CD14-positive monocyte (primary cell): ENCODE measurements at regions of chr10 and their contacts with region 1.

Region 1: DNA sequence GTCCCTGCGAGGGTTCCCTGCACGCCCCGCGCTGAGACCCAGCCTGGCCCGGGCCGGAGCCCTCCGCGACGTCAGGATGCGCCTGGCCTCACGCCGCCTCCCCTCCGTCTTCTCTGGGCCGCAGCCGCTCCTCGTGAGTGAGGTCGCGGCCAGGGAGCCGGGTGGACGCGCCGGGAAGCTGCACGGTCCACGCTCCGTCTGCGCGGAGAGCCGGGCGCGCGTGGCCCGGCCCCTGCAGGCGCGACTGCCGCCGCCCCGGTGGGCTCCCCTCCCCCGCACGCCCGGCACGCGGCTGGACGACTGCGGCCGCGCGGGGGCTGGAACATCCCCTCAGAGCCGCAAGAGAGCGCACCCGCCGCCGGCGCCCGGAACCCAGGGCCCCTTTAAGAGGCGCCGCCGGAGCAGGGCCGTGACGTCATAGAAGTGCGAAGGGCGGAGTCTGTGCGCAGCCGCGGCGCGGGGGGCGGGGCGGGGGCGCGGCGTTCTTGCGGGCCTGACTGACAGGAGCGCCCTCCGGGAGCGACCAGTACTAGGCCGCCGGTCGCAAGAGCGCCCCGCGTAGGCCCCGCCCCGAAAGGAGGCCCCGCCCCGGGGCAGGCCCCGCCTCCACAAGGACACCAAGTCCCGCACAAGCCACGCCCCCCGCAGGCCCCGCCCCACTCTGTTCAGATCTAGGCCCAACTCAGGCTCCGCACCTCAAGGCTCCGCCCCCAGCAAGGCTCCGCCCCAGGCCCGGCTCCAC is 445 bp upstream of the INPP5A start:
- DNase-seq: peak; percentile 99
- H3K4me3 ChIP-seq: peak overlapping the region; percentile 20 to 74 (median 42)
- H3K4me3 Mint-ChIP-seq: peak overlapping the region; percentile 62 to 72
- H3K27ac ChIP-seq: peak overlapping the region in 1 of 2 donors; percentile 70
- H3K27ac Mint-ChIP-seq: no peak overlapping the region
- H3K4me1 ChIP-seq: peaks cover 47 to 58% of the 10 kb centered on the region in 2 donors
- H3K4me1 Mint-ChIP-seq: peaks cover 54% of the 10 kb centered on the region
- H3K27me3 ChIP-seq: no peaks in the 10 kb centered on the region
- H3K27me3 Mint-ChIP-seq: peaks cover 3 to 10% (median 8%) of the 10 kb centered on the region in 3 donors
- CTCF ChIP-seq: no peak

Region 2: GRCh38 chr10:132307823-132308587 is 229.1 kb before region 1 on chr10 and contains the start of gene STK32C:
- intact Hi-C with region 1: loop called (anchors 5 to 10 kb)
- DNase-seq: peak; percentile 84 to 89 (median 86)
- H3K4me3 ChIP-seq: peak within 1 kb of the TSS; percentile 69 to 87 (median 82)
- H3K4me3 Mint-ChIP-seq: peak within 1 kb of the TSS; percentile 96 to 97
- H3K27ac ChIP-seq: peak within 1 kb of the TSS in 1 of 2 donors; percentile 56
- H3K27ac Mint-ChIP-seq: peak within 1 kb of the TSS in 2 of 7 donors; percentile 26 to 76
- H3K4me1 ChIP-seq: peaks cover 16 to 24% of the 10 kb centered on the region in 2 donors
- H3K4me1 Mint-ChIP-seq: peaks cover 24% of the 10 kb centered on the region
- H3K27me3 ChIP-seq: peaks cover 4 to 33% of the 10 kb centered on the region in 2 donors
- H3K27me3 Mint-ChIP-seq: peaks cover 24 to 41% (median 25%) of the 10 kb centered on the region in 3 donors
- CTCF ChIP-seq: no peak
- polyA plus RNA-seq, gene STK32C: 13.6 to 22.8 (median 18.4) TPM

Region 3: DNA sequence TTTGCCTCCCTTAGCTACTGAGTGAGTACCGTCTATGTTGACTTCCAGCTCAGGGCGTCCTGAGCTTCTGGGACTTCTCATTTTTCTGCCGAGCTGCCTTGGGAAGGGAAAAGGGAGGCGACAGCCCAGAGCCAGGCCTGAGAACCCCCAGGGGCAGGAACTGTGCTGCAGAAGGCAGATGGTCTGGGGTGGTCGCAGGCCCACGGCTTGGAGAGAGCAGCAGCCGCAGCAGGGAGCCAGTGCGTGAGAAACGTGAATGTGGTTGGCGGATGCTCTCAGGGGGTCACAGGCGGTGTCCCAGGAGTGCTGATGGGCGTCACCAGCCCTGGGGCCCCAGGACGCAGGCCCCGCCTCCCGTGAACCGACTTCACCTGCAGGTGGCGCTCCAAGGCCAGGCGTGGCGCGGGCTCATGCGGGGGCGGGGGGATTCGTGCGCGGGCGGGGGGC is 149.4 kb before region 1 on chr10:
- intact Hi-C with region 1: loop called (anchors 10 kb)
- DNase-seq: peak; percentile 61 to 71 (median 61)
- H3K4me3 ChIP-seq: peak overlapping the region in 2 of 3 experiments; percentile 25 to 65
- H3K4me3 Mint-ChIP-seq: peak overlapping the region; percentile 70 to 75
- H3K27ac ChIP-seq: peak overlapping the region; percentile 63 to 71
- H3K27ac Mint-ChIP-seq: peak overlapping the region; percentile 51 to 93 (median 84)
- H3K4me1 ChIP-seq: peaks cover 36 to 57% of the 10 kb centered on the region in 2 donors
- H3K4me1 Mint-ChIP-seq: peaks cover 46% of the 10 kb centered on the region
- H3K27me3 ChIP-seq: peaks cover 0 to 6% of the 10 kb centered on the region in 2 donors
- H3K27me3 Mint-ChIP-seq: peaks cover 3 to 21% (median 5%) of the 10 kb centered on the region in 3 donors
- CTCF ChIP-seq: peak; percentile 52

Region 4: DNA sequence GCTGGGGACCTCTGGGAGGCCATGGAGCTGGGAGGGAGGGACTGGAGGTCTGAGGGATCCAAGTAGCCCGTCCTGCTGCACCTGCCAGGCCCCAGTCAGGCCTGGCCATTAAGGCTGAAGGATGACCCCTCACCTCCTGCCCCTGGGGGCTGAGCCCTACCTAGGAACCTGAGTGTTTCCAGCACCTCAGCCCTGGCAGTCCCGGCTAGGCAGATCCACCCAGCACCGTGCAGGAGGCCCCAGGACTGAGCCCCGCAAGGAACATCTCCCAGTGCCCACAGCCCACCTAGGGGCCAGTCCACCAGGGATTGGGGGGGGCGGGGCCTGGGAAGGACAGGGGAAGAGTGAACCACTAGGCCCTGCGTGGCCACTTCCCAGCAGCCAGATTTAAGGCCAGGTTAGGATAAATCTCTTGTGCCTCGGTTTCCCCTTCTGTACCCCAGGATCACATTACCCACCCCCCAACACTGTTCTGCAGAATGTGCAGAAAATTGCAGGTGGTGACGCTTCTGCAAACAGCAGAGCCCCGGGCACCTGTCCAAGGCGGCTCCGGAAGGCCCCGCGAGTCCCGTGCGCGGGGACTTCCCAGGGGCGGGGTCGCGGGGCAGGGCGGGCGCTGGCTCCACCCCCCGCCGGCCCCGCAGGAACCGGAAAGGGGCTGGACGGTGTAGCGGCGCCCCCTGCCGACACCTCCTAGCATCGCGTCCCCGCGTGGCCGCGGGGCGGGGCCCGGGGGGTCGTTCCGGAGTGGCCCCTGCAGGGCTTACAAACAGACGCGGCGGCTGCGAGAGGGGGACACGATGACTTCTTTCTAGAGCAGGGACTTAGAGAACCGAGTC is 84.3 kb before region 1 on chr10:
- intact Hi-C with region 1: loop called (anchors 5 kb)
- DNase-seq: peak; percentile 77 to 91 (median 80)
- H3K4me3 ChIP-seq: peak overlapping the region in 2 of 3 experiments; percentile 1 to 43
- H3K4me3 Mint-ChIP-seq: peak overlapping the region; percentile 48 to 78
- H3K27ac ChIP-seq: peak overlapping the region; percentile 42 to 75
- H3K27ac Mint-ChIP-seq: peak overlapping the region; percentile 66 to 91 (median 82)
- H3K4me1 ChIP-seq: peaks cover 44 to 48% of the 10 kb centered on the region in 2 donors
- H3K4me1 Mint-ChIP-seq: peaks cover 34% of the 10 kb centered on the region
- H3K27me3 ChIP-seq: peaks cover 0 to 2% of the 10 kb centered on the region in 2 donors
- H3K27me3 Mint-ChIP-seq: peaks cover 2 to 6% (median 2%) of the 10 kb centered on the region in 3 donors
- CTCF ChIP-seq: peak; percentile 99

Region 5: GRCh38 chr10:132489087-132489703 is 47.9 kb before region 1 on chr10:
- intact Hi-C with region 1: no loop called
- DNase-seq: no peak
- H3K4me3 ChIP-seq: no peak overlapping the region
- H3K4me3 Mint-ChIP-seq: no peak overlapping the region
- H3K27ac ChIP-seq: no peak overlapping the region
- H3K27ac Mint-ChIP-seq: no peak overlapping the region
- H3K4me1 ChIP-seq: no peaks in the 10 kb centered on the region
- H3K4me1 Mint-ChIP-seq: no peaks in the 10 kb centered on the region
- H3K27me3 ChIP-seq: no peaks in the 10 kb centered on the region
- H3K27me3 Mint-ChIP-seq: peaks cover 0 to 8% (median 4%) of the 10 kb centered on the region in 3 donors
- CTCF ChIP-seq: no peak

Region 6: GRCh38 chr10:132499367-132499685 is 37.8 kb before region 1 on chr10:
- intact Hi-C with region 1: no loop called
- DNase-seq: no peak
- H3K4me3 ChIP-seq: no peak overlapping the region
- H3K4me3 Mint-ChIP-seq: no peak overlapping the region
- H3K27ac ChIP-seq: no peak overlapping the region
- H3K27ac Mint-ChIP-seq: no peak overlapping the region
- H3K4me1 ChIP-seq: peaks cover 16 to 20% of the 10 kb centered on the region in 2 donors
- H3K4me1 Mint-ChIP-seq: peaks cover 27% of the 10 kb centered on the region
- H3K27me3 ChIP-seq: no peaks in the 10 kb centered on the region
- H3K27me3 Mint-ChIP-seq: peaks cover 4 to 19% (median 10%) of the 10 kb centered on the region in 3 donors
- CTCF ChIP-seq: no peak

Region 7: DNA sequence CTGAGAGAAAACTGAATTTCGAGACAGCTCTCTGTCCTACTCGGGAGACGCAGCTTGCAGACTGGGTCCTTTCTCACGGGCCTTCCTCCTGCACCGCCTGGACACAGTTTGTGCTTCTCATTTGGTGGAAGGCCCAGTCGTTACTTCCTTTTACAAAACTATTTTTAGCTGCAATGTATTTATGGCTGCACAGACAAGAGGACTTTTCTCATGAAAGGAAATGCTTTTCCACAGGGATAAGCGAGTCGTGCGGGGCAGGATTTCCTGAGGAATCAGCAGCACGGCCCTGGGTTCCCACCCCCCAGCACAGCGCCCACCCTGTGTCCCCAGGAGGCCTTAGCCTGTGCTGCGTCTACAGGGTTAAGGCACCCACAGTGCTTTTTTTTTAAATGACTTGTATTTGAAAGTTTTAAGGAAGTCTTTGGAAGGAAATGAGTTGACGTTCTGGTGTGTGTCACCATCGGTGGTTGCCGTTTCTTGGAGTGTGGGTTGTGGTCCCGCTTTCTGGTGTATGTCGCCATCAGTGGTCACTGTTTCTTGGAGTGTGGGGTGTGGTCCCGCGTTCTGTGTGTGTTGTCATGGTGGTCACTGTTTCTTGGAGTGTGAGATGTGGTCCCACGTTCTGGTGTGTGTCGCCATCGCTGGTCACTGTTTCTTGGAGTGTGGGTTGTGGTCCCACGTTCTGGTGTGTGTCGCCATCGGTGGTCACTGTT is 51.3 kb after region 1 on chr10:
- intact Hi-C with region 1: loop called in 1 of 2 experiments (anchors 5 kb)
- DNase-seq: peak; percentile 97 to 99 (median 98)
- H3K4me3 ChIP-seq: peak overlapping the region; percentile 6 to 63 (median 25)
- H3K4me3 Mint-ChIP-seq: peak overlapping the region; percentile 62 to 83
- H3K27ac ChIP-seq: peak overlapping the region; percentile 91 to 95
- H3K27ac Mint-ChIP-seq: peak overlapping the region; percentile 98 to 99 (median 99)
- H3K4me1 ChIP-seq: peaks cover 80% of the 10 kb centered on the region in 2 donors
- H3K4me1 Mint-ChIP-seq: peaks cover 83% of the 10 kb centered on the region
- H3K27me3 ChIP-seq: no peaks in the 10 kb centered on the region
- H3K27me3 Mint-ChIP-seq: peaks cover 0 to 24% (median 8%) of the 10 kb centered on the region in 3 donors
- CTCF ChIP-seq: no peak

Region 8: GRCh38 chr10:132637477-132638129 is 100.5 kb after region 1 on chr10:
- intact Hi-C with region 1: loop called (anchors 5 to 10 kb)
- DNase-seq: peak; percentile 49 to 57 (median 53)
- H3K4me3 ChIP-seq: no peak overlapping the region
- H3K4me3 Mint-ChIP-seq: peak overlapping the region in 1 of 2 donors; percentile 64
- H3K27ac ChIP-seq: no peak overlapping the region
- H3K27ac Mint-ChIP-seq: peak overlapping the region in 1 of 7 donors; percentile 7
- H3K4me1 ChIP-seq: peaks cover 4% of the 10 kb centered on the region in 2 donors
- H3K4me1 Mint-ChIP-seq: peaks cover 12% of the 10 kb centered on the region
- H3K27me3 ChIP-seq: no peaks in the 10 kb centered on the region
- H3K27me3 Mint-ChIP-seq: peaks cover 0 to 2% (median 0%) of the 10 kb centered on the region in 3 donors
- CTCF ChIP-seq: peak; percentile 71